Activated CD8-positive, alpha-beta T cell treated with anti-CD3 and anti-CD28 coated beads for 36 hours (primary cell): ENCODE measurements at regions of chr6 and their contacts with region 1.

Region 1: DNA sequence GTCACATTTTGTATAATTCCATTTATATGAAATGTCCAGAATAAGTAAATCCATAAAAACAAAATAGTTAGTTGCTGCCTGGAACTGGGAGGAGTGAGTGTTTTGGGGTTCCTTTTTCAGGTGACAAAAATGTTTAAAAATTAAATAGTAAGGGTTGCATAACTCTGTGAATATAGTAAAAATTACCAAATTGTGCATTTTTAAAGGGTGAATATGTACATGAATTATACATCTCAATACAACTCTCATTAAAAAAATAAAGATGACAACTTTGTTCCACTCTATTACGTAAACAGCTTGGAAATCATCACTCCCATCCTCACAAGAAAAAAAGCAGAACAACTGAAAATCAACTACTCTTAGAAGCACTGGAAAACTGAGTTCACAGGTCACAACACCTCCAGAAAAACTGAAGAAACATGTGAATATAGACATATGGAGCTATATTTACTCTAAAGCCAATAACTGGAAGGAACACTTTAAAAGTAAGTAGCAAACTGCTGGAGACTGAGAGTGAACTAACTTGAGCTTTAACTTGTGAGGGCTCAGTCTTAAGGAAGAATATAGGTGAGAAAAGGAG is 40.0 kb downstream of the RANBP9 start:
- DNase-seq: no peak
- ATAC-seq: no peak
- H3K4me3 Mint-ChIP-seq: no peak overlapping the region
- H3K27ac Mint-ChIP-seq: peak overlapping the region; percentile 1
- H3K4me1 Mint-ChIP-seq: peaks cover 77% of the 10 kb centered on the region
- H3K27me3 Mint-ChIP-seq: no peaks in the 10 kb centered on the region
- CTCF ChIP-seq: no peak

Region 2: GRCh38 chr6:13413900-13414555 is 257.6 kb before region 1 on chr6:
- CTCF ChIA-PET with region 1: no interaction called
- POLR2A ChIA-PET with region 1: no interaction called
- intact Hi-C with region 1: no loop called
- DNase-seq: no peak
- ATAC-seq: peak; percentile 60
- H3K4me3 Mint-ChIP-seq: no peak overlapping the region
- H3K27ac Mint-ChIP-seq: no peak overlapping the region
- H3K4me1 Mint-ChIP-seq: peaks cover under 1% of the 10 kb centered on the region
- H3K27me3 Mint-ChIP-seq: no peaks in the 10 kb centered on the region
- CTCF ChIP-seq: no peak

Region 3: DNA sequence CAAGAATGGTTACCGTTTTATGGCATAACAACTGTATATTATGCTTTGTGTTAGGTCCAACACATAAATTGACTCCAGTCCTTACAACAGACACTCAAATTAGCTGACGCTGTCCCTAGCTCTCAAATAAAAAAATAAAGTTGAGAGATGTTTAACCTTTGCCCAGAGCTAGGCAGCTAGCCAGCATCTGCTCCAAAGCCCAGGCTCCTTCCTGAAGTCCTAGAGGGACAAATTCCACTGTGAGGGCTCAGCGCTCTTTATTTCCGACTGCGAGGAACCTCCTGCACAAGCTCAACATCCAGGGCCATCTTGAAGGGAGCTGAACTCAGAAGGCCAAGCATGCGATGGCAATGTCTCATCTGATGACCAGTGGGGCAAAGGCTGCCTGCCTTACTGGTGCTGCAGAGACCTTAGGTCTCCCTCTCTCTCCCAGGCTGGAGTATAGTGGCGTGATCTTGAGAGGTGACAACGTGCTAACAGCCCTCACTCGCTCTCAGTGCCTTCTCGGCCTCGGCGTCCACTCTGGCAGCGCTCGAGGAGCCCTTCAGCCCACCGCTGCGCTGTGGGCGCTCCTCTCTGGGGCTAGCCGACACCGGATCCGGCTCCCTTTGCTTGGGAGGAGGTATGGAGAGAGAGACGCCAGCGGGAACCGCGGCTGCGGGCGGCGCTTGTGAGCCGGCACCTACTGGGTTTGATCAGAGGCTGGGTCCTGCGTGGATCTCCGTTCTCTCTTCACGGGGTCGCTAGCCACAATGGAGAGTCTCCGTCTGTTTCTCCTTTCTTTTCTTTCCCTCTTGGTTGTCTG is 159.5 kb before region 1 on chr6:
- CTCF ChIA-PET with region 1: no interaction called
- POLR2A ChIA-PET with region 1: no interaction called
- intact Hi-C with region 1: no loop called
- DNase-seq: no peak
- ATAC-seq: no peak
- H3K4me3 Mint-ChIP-seq: no peak overlapping the region
- H3K27ac Mint-ChIP-seq: no peak overlapping the region
- H3K4me1 Mint-ChIP-seq: no peaks in the 10 kb centered on the region
- H3K27me3 Mint-ChIP-seq: no peaks in the 10 kb centered on the region
- CTCF ChIP-seq: no peak

Region 4: GRCh38 chr6:13687917-13688351 is 16.3 kb after region 1 on chr6:
- CTCF ChIA-PET with region 1: interaction called, 11 read pairs
- POLR2A ChIA-PET with region 1: interaction called, 6 read pairs
- intact Hi-C with region 1: no loop called
- DNase-seq: no peak
- ATAC-seq: peak; percentile 19
- H3K4me3 Mint-ChIP-seq: no peak overlapping the region
- H3K27ac Mint-ChIP-seq: peak overlapping the region; percentile 75
- H3K4me1 Mint-ChIP-seq: peaks cover 62% of the 10 kb centered on the region
- H3K27me3 Mint-ChIP-seq: no peaks in the 10 kb centered on the region
- CTCF ChIP-seq: no peak

Region 5: GRCh38 chr6:13814176-13814937 is 142.7 kb after region 1 on chr6 and contains the start of gene MCUR1:
- CTCF ChIA-PET with region 1: no interaction called
- POLR2A ChIA-PET with region 1: no interaction called
- intact Hi-C with region 1: no loop called
- DNase-seq: peak; percentile 87
- ATAC-seq: peak; percentile 89
- H3K4me3 Mint-ChIP-seq: peak within 1 kb of the TSS; percentile 86
- H3K27ac Mint-ChIP-seq: peak within 1 kb of the TSS; percentile 86
- H3K4me1 Mint-ChIP-seq: peaks cover 28% of the 10 kb centered on the region
- H3K27me3 Mint-ChIP-seq: peaks cover 3% of the 10 kb centered on the region
- CTCF ChIP-seq: no peak
- total RNA-seq, gene MCUR1: 34.8 to 38.0 TPM